HEK293 (cell line): ENCODE measurements at regions of chr1 and their contacts with region 1.

Region 1: GRCh38 chr1:173917149-173917548 is at the start of gene SERPINC1:
- H3K4me3 ChIP-seq: no peak within 1 kb of the TSS
- H3K27ac ChIP-seq: no peak within 1 kb of the TSS
- H3K4me1 ChIP-seq: no peaks in the 10 kb centered on the region
- CTCF ChIP-seq: no peak

Region 2: DNA sequence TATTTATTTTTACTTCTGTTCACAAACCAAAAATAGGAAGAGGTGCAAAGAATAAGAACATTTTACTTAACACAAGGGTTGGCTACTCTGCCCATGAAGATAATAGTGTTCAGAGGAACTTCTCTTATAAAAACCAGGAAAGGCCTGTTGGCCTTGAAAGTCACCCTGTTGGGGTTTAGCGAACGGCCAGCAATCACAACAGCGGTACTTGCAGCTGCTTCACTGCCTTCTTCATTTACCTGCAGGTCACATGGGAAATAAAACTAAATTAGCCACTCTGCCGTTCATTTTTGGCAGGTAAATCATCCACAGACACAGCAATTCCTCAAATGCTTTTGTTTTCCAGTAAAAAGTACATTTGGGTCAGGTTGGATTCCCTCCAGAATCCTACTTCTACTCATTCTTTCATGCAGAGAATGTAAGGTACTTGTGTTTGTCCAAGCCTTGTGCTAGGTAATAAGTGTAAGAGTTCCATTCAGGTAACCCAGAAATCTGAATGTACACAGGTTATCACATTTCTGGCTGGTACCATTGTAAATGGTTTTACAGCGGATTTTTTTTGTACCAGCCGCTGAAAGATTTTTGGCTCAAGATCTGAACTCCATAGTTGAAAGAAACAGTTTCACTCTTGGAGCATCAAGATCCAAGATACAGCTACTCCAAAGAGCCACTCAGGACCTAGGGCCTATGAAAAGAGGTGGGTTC is 13.2 kb before region 1 on chr1:
- CTCF ChIA-PET with region 1: interaction called, 16 read pairs
- POLR2A ChIA-PET with region 1: no interaction called
- H3K4me3 ChIP-seq: no peak overlapping the region
- H3K27ac ChIP-seq: no peak overlapping the region
- H3K4me1 ChIP-seq: no peaks in the 10 kb centered on the region
- CTCF ChIP-seq: no peak